OCI-LY7 (cell line): ENCODE measurements at regions of chr11 and their contacts with region 1.

Region 1: GRCh38 chr11:14519917-14520746 is at the start of gene PSMA1:
- DNase-seq: peak; percentile 94
- H3K4me3 ChIP-seq: peak within 1 kb of the TSS; percentile 94
- H3K27ac ChIP-seq: peak within 1 kb of the TSS; percentile 64
- H3K4me1 ChIP-seq: peaks cover 19% of the 10 kb centered on the region
- CTCF ChIP-seq: no peak
- total RNA-seq, gene PSMA1: 134 and 173 TPM in 2 replicates

Region 2: DNA sequence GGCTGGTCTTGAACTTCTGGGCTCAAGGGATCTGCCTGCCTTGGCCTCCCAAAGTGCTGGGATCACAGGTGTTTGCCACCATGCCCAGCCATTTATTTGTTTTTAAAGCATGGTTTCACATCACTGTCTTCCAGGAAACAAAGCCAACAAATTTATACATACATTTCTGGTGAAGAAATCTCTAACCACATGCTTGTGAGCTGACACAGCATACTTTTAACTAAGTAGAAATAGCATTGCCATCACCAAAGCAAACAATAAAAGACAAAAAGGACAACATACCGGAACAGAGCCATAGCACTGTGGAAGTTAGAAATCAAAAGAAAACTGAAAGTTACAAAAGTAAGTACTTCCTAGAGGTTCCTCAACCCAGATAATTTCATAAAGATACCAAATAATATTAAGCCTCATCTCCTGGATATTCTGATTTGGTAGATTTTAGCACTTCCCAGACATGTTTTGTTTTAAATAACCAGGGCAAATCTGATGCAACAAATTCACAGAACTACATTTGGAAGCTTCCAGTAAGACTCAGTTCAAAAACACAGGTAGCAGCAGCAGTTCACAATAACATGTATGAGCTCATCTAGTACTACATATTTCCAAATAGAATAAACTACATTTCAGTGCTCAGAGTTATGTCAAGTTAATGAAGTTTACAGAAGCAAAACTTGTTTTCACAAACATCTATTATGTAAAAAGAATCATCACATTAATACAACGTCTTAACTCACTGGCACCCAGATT is 231.8 kb before region 1 on chr11:
- CTCF ChIA-PET with region 1: no interaction called
- POLR2A ChIA-PET with region 1: no interaction called
- intact Hi-C with region 1: no loop called
- DNase-seq: no peak
- H3K4me3 ChIP-seq: no peak overlapping the region
- H3K27ac ChIP-seq: no peak overlapping the region
- H3K4me1 ChIP-seq: no peaks in the 10 kb centered on the region
- CTCF ChIP-seq: no peak

Region 3: DNA sequence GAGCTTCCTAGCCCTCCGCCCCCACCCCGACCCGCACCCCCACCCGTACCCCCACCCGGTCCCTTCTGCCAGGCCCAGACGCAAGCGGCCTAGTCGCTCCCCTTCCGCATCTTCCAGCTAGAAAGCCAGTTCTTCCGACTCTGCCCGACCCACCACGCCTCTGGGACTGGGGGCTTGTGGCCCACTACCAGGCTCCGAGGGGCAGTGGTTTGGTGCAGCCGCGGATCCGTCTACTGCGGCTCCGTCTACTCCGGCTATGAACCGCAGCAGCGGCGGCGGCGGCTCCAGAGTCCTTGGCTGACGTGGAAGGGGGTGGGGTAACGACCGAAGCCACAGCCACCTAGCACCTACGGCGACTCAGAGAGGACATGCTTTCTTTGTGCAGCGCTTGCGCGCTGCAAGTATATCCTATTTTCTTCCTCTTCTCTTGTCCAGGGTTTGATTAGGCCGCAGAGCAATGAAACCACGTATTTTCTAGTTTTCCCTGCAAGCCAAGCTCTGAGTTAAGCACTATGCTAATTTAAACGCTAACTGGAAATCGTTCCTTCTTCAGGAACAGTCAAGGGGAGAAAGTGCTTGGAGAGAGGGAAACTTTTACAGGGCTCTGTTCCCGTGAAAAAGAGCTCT is 20.5 kb before region 1 on chr11 and contains the start of gene COPB1:
- CTCF ChIA-PET with region 1: interaction called, 5 read pairs
- POLR2A ChIA-PET with region 1: interaction called, 16 read pairs
- intact Hi-C with region 1: loop called (anchors 1 kb)
- DNase-seq: peak; percentile 94
- H3K4me3 ChIP-seq: peak within 1 kb of the TSS; percentile 100
- H3K27ac ChIP-seq: peak within 1 kb of the TSS; percentile 74
- H3K4me1 ChIP-seq: peaks cover 19% of the 10 kb centered on the region
- CTCF ChIP-seq: no peak
- total RNA-seq, gene COPB1: 61.1 and 81.7 TPM in 2 replicates

Region 4: DNA sequence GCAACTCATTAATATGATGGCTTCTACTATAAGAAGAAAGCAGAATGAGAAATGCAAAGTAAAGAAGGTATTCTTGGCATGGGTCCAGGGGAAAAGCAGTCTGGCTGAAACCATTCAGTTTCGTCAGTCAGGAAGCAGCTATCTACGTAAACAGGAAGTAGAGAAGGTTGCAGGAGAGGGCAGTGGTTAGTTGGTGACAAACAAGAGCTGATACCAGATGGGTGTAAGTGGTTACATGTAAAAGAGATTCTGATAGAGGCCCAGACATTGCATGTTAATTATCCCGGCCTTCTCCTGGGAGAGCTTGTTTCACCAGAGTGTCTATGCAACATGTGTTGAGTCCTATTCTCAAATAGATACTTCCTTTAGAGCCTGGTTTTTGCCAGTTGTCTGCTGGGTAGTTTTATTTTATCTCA is 58.4 kb after region 1 on chr11:
- CTCF ChIA-PET with region 1: no interaction called
- POLR2A ChIA-PET with region 1: interaction called, 4 read pairs
- intact Hi-C with region 1: loop called (anchors 2 kb)
- DNase-seq: peak; percentile 80
- H3K4me3 ChIP-seq: peak overlapping the region; percentile 48
- H3K27ac ChIP-seq: peak overlapping the region; percentile 47
- H3K4me1 ChIP-seq: peaks cover 14% of the 10 kb centered on the region
- CTCF ChIP-seq: no peak

Region 5: DNA sequence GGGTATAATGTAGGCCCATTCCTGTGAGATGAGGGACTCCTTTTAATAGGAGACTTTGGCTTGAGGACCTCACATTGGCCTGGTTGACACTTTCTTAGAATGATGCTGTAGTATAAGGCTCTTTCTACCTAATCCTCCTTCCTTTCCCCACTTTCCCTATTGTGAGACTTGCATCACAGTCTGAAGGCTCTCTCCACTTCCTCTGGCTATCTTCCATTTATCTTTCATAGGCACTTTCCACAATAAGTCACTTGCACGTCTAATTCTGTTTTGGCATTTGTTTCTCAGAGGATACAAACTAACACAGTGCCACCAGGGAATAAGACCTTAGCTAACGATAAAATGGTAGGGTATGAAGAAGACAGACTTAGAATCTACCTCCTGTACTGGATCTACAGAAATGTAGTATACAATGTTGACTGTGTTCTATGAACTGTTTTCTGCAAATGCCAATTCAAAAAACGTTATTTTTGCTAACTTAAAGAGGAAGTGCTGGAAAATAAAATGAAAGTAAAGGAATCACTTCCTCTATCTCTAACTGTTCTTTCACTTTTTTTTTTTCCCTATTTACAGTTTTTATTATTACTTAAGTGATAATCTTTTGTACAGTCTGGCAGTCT is 105.6 kb after region 1 on chr11:
- CTCF ChIA-PET with region 1: no interaction called
- POLR2A ChIA-PET with region 1: interaction called, 3 read pairs
- intact Hi-C with region 1: loop called (anchors 5 kb)
- DNase-seq: peak; percentile 34
- H3K4me3 ChIP-seq: peak overlapping the region; percentile 23
- H3K27ac ChIP-seq: peak overlapping the region; percentile 46
- H3K4me1 ChIP-seq: peaks cover 16% of the 10 kb centered on the region
- CTCF ChIP-seq: no peak

Region 6: GRCh38 chr11:14809466-14809865 is 289.3 kb after region 1 on chr11:
- CTCF ChIA-PET with region 1: no interaction called
- POLR2A ChIA-PET with region 1: no interaction called
- intact Hi-C with region 1: no loop called
- DNase-seq: no peak
- H3K4me3 ChIP-seq: no peak overlapping the region
- H3K27ac ChIP-seq: no peak overlapping the region
- H3K4me1 ChIP-seq: no peaks in the 10 kb centered on the region
- CTCF ChIP-seq: no peak

Region 7: DNA sequence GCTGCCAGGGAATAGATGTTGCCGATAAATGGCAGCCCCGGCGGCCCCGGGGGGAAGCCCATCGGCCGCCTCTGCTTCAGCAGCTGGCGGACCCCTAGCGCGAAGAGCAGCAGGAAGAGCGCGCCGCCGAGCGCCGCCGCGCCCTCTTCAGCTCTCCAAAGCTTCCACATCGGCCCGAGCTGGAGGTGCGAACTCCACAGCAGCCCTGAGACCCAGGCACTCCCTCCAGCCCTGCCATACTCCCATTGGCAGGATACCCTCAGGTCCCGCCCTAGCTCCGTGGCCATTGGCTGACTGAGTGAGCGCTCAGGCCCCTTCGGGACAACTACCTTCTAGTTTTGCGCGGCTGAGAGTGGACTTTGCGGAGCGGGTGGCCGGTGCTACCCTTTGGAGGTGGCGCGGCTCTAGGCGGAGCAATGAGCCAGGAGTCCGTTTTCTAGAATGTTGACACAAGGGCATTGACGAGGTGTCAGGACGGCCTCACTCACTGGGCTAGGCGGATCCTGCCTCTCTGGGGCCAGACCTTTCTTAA is 372.0 kb after region 1 on chr11 and contains the start of gene CYP2R1:
- CTCF ChIA-PET with region 1: no interaction called
- POLR2A ChIA-PET with region 1: interaction called, 9 read pairs
- intact Hi-C with region 1: loop called (anchors 1 kb)
- DNase-seq: peak; percentile 97
- H3K4me3 ChIP-seq: peak within 1 kb of the TSS; percentile 69
- H3K27ac ChIP-seq: peak within 1 kb of the TSS; percentile 51
- H3K4me1 ChIP-seq: peaks cover 28% of the 10 kb centered on the region
- CTCF ChIP-seq: peak; percentile 30; the same call in 1 of the 2 replicates
- total RNA-seq, gene CYP2R1: 22.5 and 24.8 TPM in 2 replicates